ENCODE measurements at regions of chr1 and their contacts with region 1.

Region 1: DNA sequence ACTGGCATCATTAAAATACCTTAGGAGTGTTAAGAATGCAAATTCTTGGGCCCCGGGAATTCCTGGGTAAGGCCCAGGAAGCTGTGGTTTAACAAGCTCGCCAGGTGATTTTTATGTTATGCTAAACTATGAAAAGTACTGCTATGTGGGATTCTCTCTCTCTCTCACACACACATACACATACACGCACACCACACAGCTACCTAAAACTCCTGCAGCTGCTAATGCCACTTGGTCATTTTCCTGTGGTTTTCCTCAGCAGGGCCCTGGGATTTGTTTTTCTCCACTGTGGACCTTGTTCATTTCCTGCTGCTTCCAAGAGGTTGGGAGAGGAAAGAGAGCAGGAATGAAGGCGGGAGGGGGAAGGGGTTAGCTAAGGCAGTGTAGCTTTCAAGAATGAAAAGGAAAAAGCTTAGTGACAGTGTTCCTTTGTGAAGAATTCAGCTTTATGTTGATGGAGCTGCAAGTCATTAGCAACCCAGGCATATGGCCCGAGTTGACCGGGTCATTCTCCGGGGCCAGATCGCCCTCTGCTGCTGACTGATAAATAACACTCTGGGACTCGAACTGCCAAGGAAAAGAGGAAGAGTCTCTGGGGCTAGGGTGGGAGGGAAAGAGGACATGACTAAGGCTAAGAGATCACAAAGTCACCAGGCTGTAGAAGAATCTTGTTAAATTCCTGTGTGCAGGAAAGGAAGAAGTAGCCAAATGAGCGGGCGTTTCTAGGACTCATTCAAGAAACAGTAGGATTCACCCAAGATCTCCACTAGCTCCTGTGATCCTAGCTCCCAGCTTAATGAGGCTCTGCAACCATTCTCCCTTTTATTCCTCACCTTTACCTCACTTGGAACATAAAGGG is 30.5 kb upstream of the LRIG2 start:
- DNase-seq: peak; percentile 37 to 85
- H3K4me3 ChIP-seq: no peak overlapping the region
- H3K27ac ChIP-seq: no peak overlapping the region
- H3K4me1 ChIP-seq: peaks cover 0 to 5% of the 10 kb centered on the region in 2 donors
- H3K27me3 ChIP-seq: no peaks in the 10 kb centered on the region
- CTCF ChIP-seq: peak; percentile 61 to 83 (median 66)

Region 2: GRCh38 chr1:112803906-112804762 is 238.4 kb before region 1 on chr1:
- intact Hi-C with region 1: loop called (anchors 2 kb)
- DNase-seq: no peak
- H3K4me3 ChIP-seq: no peak overlapping the region
- H3K27ac ChIP-seq: no peak overlapping the region
- H3K4me1 ChIP-seq: no peaks in the 10 kb centered on the region
- H3K27me3 ChIP-seq: no peaks in the 10 kb centered on the region
- CTCF ChIP-seq: peak; percentile 21 to 53 (median 36)

Region 3: DNA sequence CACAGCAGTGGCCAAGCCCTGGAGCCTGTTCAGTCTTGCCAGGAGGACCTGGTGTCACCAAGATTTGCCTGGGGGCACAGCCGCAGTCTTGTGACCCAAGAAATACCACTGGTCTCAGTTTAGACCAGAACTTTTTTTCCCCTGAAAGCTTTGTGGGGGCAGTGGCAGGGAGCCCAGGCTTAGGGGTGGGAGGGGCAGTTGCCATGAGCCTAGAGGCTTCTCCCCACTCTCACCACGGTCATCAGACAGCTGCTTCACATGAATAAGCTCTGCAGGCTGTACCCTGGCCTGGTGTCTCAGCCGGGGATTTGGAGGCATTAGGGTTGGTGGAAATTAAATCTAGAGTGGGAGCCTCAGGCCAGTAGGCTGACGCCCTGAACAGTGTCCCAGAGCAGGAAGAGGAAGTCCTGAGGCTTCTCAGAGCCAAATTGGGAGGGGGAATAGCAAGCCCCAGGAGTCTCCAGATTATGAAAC is 160.2 kb before region 1 on chr1:
- intact Hi-C with region 1: loop called (anchors 1 kb)
- DNase-seq: no peak
- H3K4me3 ChIP-seq: no peak overlapping the region
- H3K27ac ChIP-seq: no peak overlapping the region
- H3K4me1 ChIP-seq: no peaks in the 10 kb centered on the region
- H3K27me3 ChIP-seq: no peaks in the 10 kb centered on the region
- CTCF ChIP-seq: no peak

Region 4: DNA sequence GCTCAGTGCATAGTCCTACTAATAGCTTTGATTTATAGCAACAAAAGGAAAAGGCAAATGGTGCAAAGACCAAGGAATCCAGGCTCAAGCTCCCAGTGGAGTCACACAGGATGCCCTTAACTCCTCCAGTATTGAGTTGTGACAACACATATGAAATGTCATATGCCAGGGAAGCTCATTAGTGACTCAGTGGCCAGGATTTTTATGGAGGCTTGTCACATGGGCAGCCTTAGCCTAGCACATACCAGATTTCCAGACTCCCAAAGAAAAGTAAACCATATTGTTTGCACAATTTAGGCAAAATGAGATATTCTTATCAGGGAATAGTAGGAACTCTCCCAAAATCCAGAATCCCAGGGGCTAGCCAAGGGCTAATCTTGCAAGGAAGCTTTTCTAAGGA is 477.0 kb after region 1 on chr1:
- intact Hi-C with region 1: no loop called
- DNase-seq: no peak
- H3K4me3 ChIP-seq: no peak overlapping the region
- H3K27ac ChIP-seq: no peak overlapping the region
- H3K4me1 ChIP-seq: no peaks in the 10 kb centered on the region
- H3K27me3 ChIP-seq: no peaks in the 10 kb centered on the region
- CTCF ChIP-seq: no peak

Measured in ascending aorta (tissue), 2 donors.